Endothelial cell of umbilical vein (primary cell): ENCODE measurements at regions of chr12 and their contacts with region 1.

Region 1: GRCh38 chr12:98743347-98743953 is 98.4 kb downstream of the APAF1 start:
- DNase-seq: peak; percentile 42
- H3K4me3 ChIP-seq: no peak overlapping the region
- H3K27ac ChIP-seq: no peak overlapping the region
- H3K4me1 ChIP-seq: peaks cover 8% of the 10 kb centered on the region
- H3K27me3 ChIP-seq: peaks cover 11 to 12% of the 10 kb centered on the region in 2 experiments
- CTCF ChIP-seq: peak; percentile 75 to 78
- POLR2A ChIP-seq: no peak

Region 2: GRCh38 chr12:98698603-98699463 is 44.6 kb before region 1 on chr12:
- CTCF ChIA-PET with region 1: interaction called, 7 read pairs
- POLR2A ChIA-PET with region 1: no interaction called
- dilution Hi-C with region 1: no loop called
- intact Hi-C with region 1: loop called (anchors 1 kb)
- DNase-seq: peak; percentile 74
- H3K4me3 ChIP-seq: no peak overlapping the region
- H3K27ac ChIP-seq: no peak overlapping the region
- H3K4me1 ChIP-seq: peaks cover 2% of the 10 kb centered on the region
- H3K27me3 ChIP-seq: no peaks in the 10 kb centered on the region
- CTCF ChIP-seq: peak; percentile 44 to 71
- POLR2A ChIP-seq: no peak

Region 3: GRCh38 chr12:98719515-98720504 is 23.6 kb before region 1 on chr12:
- CTCF ChIA-PET with region 1: interaction called, 14 read pairs
- POLR2A ChIA-PET with region 1: no interaction called
- dilution Hi-C with region 1: no loop called
- intact Hi-C with region 1: no loop called
- DNase-seq: no peak
- H3K4me3 ChIP-seq: no peak overlapping the region
- H3K27ac ChIP-seq: no peak overlapping the region
- H3K4me1 ChIP-seq: no peaks in the 10 kb centered on the region
- H3K27me3 ChIP-seq: no peaks in the 10 kb centered on the region
- CTCF ChIP-seq: no peak
- POLR2A ChIP-seq: no peak

Region 4: DNA sequence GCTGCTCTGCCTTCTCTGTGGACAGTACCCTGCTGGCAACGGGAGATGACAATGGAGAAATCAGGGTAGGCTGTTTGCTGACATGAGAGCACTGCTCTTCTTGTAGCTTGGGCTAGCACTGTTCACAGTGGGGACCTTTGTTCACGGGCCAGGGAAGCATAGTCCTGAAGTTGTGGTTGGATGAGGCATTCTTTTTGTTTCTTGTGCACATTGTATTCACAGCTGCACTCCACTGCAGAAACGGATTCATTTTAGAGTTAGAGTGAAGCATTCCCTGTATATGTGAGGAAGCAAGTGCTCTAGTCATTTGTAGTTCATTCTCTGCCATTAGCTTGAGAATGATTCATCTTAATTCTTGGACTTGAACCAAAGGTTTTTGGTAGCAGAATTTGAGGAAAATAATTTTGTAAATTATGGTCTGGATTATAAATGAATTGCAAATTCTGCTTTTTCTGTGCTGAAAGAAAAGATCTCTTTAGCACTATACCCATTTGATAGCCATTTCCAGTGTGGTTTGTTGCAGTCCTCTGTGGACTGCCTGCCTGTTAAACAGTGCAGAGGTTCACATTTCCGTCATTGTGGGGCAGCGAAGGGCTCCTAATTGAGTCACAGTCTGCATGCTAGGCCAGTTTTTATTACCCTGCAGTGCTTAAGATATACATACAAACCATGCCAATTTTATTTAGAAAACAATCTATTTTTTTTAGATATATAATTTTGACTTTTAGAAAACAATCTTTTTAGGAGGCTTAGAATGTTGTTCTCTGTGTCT is 17.8 kb before region 1 on chr12:
- CTCF ChIA-PET with region 1: interaction called, 46 read pairs
- POLR2A ChIA-PET with region 1: no interaction called
- dilution Hi-C with region 1: no loop called
- intact Hi-C with region 1: no loop called
- DNase-seq: peak; percentile 51
- H3K4me3 ChIP-seq: no peak overlapping the region
- H3K27ac ChIP-seq: no peak overlapping the region
- H3K4me1 ChIP-seq: no peaks in the 10 kb centered on the region
- H3K27me3 ChIP-seq: no peaks in the 10 kb centered on the region
- CTCF ChIP-seq: peak; percentile 34 to 53
- POLR2A ChIP-seq: no peak

Region 5: GRCh38 chr12:98856897-98857540 is 113.6 kb after region 1 on chr12:
- CTCF ChIA-PET with region 1: no interaction called
- POLR2A ChIA-PET with region 1: no interaction called
- dilution Hi-C with region 1: no loop called
- intact Hi-C with region 1: no loop called
- DNase-seq: no peak
- H3K4me3 ChIP-seq: no peak overlapping the region
- H3K27ac ChIP-seq: no peak overlapping the region
- H3K4me1 ChIP-seq: no peaks in the 10 kb centered on the region
- H3K27me3 ChIP-seq: peaks cover 0 to 2% of the 10 kb centered on the region in 2 experiments
- CTCF ChIP-seq: no peak
- POLR2A ChIP-seq: no peak

Region 6: GRCh38 chr12:98955277-98955676 is 211.8 kb after region 1 on chr12:
- CTCF ChIA-PET with region 1: no interaction called
- POLR2A ChIA-PET with region 1: no interaction called
- dilution Hi-C with region 1: no loop called
- intact Hi-C with region 1: no loop called
- DNase-seq: peak; percentile 21
- H3K4me3 ChIP-seq: no peak overlapping the region
- H3K27ac ChIP-seq: no peak overlapping the region
- H3K4me1 ChIP-seq: no peaks in the 10 kb centered on the region
- H3K27me3 ChIP-seq: no peaks in the 10 kb centered on the region
- CTCF ChIP-seq: peak; percentile 16 to 33
- POLR2A ChIP-seq: no peak

Region 7: DNA sequence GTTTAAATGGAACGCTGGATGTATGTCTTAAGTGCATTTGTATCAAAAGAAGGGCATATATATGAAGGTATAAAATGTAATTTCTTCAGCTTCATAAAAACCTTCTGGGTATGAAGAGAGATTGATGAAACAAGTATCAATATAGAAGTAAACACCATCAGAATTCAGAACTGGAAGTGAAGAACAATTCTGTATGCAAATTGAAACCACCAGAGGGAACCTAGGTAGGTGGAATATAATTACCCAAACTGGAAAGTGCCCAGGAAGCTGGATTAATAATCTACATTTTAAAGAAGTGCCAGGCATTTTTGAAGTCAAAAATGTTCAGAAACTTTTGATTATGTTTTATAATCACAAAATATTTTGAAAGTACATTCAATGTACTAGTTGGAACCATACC is 567.9 kb after region 1 on chr12:
- CTCF ChIA-PET with region 1: no interaction called
- POLR2A ChIA-PET with region 1: no interaction called
- dilution Hi-C with region 1: no loop called
- intact Hi-C with region 1: no loop called
- DNase-seq: no peak
- H3K4me3 ChIP-seq: no peak overlapping the region
- H3K27ac ChIP-seq: no peak overlapping the region
- H3K4me1 ChIP-seq: no peaks in the 10 kb centered on the region
- H3K27me3 ChIP-seq: no peaks in the 10 kb centered on the region
- CTCF ChIP-seq: no peak
- POLR2A ChIP-seq: no peak

Region 8: DNA sequence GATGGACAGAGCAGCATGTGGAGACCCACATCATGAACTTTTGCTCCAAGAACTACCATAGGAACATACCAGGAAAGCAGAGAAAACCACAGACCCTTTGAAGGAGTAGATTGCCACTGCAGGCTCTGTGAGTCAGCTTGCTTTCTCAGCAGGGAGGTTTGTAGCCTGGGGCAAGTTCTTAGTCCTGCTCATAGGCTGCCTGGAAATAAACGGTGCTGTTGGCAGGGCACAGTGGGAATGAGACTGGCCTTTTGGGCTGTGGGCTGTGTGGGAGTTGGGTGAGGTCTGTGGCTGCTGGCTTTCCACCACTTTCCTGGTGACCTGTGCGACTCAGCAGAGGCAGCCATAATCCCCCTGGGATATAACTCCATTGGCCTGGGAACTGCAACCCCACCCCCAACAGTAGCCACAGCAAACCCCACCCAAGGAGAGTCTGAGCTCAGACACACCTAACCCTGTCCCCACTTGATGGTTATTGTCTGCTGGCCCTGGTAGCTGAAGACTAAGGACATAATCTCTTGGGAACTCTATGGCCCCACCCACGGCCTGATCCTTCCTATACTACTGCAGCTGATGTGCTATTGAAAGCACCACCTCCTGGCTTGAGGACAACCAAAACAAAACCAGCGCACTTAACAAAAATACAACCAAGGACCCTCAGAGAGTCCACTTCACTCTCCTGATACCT is 712.0 kb after region 1 on chr12:
- CTCF ChIA-PET with region 1: no interaction called
- POLR2A ChIA-PET with region 1: no interaction called
- dilution Hi-C with region 1: no loop called
- intact Hi-C with region 1: no loop called
- DNase-seq: no peak
- H3K4me3 ChIP-seq: no peak overlapping the region
- H3K27ac ChIP-seq: no peak overlapping the region
- H3K4me1 ChIP-seq: no peaks in the 10 kb centered on the region
- H3K27me3 ChIP-seq: no peaks in the 10 kb centered on the region
- CTCF ChIP-seq: no peak
- POLR2A ChIP-seq: no peak